GM13977 (cell line): ENCODE measurements at regions of chr14 and their contacts with region 1.

Region 1: DNA sequence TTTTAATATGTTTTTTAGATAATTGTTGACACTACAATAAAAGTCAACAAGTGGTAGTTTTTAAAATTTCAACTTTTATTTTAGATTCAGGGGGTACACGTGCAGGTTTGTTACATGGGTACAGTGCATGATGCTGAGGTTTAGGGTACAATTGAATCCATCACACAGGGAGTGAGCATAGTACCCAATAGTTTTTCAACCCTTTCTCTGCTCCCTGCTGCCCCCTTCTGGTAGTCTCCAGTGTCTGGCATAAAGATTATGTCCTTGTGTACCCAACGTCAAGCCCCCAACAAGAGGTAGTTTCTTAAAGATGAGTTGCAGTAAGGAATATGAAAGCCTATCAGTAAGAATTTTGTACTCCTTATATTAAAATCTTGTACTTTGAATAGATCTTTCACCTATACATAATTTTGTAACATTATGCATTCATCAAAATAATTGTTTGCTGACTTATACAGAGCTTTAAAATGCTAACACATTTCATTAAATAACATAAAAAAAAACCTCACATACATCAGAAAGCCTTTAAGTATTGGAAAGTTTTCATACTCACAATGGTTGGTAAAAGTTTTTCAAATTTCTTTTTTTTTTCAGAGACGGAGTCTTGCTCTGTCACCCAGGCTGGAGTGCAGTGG is 5.4 kb upstream of the RALGAPA1 start:
- DNase-seq: peak; percentile 58
- CTCF ChIP-seq: peak; percentile 84

Region 2: GRCh38 chr14:35140718-35141581 is 673.5 kb before region 1 on chr14:
- in situ Hi-C with region 1: loop called (anchors 25 kb)
- DNase-seq: no peak
- CTCF ChIP-seq: peak; percentile 45

Region 3: DNA sequence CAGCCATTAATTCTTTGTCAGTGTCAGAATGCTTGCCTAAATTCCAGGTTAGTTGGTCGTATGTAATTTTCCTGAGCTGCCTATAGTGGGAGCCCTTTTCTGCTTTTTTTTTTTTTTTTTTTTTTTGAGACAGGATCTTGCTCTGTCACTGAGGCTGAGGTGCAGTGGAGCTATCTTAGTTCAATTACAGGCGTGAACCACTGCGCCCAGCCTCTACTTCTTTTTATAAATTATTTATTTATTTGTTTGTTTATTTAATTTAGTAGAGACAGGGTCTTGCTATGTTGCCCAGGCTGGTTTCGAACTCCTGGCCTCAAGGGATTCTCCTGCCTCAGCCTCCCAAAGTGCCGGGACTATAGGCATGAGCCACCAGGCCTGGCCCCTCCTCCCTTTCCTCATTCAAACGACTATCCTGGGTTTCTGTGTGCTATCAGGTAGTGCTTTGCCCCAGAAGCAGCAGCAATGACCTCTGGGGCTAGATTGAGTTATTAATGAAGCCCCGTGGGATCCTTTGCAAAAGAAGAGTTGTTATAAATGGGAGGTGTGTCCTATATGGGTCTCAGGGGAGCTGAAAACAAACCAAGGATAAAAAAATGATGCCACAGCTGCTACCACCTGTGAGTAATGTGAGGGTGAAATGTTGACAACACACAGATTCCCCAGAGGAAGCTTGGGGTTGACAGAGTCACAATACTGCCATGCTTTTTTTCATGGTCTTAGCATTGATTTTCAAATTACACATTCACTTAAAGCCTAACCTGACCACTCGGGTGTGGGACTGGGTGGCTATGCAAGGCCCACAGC is 375.4 kb before region 1 on chr14:
- in situ Hi-C with region 1: loop called (anchors 25 kb)
- DNase-seq: peak; percentile 17
- CTCF ChIP-seq: peak; percentile 43